ENCODE measurements at regions of chr17 and their contacts with region 1.

Region 1: DNA sequence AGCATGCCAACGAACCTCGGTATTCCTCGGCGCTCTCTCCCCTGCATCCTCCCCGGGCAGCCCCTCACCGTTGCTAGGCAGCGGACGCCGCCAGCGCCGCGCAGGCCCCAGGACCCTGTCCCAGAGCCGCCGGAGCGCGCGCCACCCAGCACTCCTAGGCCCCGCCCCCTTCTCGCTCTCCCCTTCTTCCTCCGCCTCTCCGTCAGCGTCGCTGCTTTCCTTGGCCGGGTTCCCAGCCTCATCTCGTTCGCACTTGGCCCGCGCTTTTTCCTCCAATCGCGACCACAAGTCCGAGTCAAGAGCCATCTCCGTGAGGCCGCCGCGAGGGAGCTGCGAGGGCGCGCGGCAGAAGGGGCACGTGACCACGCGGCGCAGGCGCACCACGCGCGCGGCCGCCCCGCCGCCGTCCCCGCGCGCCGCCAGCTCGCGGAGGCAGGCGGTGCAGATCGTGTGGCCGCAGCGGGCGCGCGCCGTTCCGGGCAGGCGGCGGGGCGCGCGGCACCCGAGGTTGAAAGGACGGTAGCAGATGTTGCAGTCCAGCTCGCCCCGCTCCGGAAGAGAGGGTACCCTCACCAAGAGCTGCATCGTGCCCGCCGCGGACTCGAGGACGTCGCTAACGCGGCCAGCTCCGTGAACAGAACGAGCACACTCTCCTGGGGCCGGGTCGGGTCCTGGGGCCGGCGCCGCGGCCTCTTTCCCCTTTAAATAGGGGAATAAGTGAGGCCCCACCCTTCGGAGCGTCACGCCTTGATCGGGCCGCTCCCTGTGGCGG is at the start of gene RNF227:
- DNase-seq: peak; percentile 92 to 97
- H3K4me3 ChIP-seq: peak within 1 kb of the TSS; percentile 40
- H3K4me1 ChIP-seq: peaks cover 17% of the 10 kb centered on the region
- H3K27me3 ChIP-seq: no peaks in the 10 kb centered on the region

Region 2: GRCh38 chr17:7989781-7990655 is 74.2 kb after region 1 on chr17:
- in situ Hi-C with region 1: loop called (anchors 10 kb)
- DNase-seq: peak; percentile 68 to 95
- H3K4me3 ChIP-seq: peak overlapping the region; percentile 38
- H3K4me1 ChIP-seq: peaks cover 16% of the 10 kb centered on the region
- H3K27me3 ChIP-seq: no peaks in the 10 kb centered on the region

Region 3: GRCh38 chr17:8057691-8058114 is 141.9 kb after region 1 on chr17:
- in situ Hi-C with region 1: loop called (anchors 5 kb)
- DNase-seq: peak; percentile 77 to 85
- H3K4me3 ChIP-seq: no peak overlapping the region
- H3K4me1 ChIP-seq: peaks cover 10% of the 10 kb centered on the region
- H3K27me3 ChIP-seq: peaks cover 10% of the 10 kb centered on the region; the same call in 1 of the 2 replicates

Measured in HAP-1 (cell line).